ENCODE measurements at regions of chr3 and their contacts with region 1.

Region 1: GRCh38 chr3:4776980-4777581 is 202.2 kb upstream of the BHLHE40 start:
- DNase-seq: peak; percentile 38
- ATAC-seq: peak; percentile 86
- H3K4me3 Mint-ChIP-seq: no peak overlapping the region
- H3K27ac Mint-ChIP-seq: peak overlapping the region; percentile 91
- H3K4me1 Mint-ChIP-seq: peaks cover 40% of the 10 kb centered on the region
- H3K27me3 Mint-ChIP-seq: no peaks in the 10 kb centered on the region

Region 2: GRCh38 chr3:4466741-4467521 is 310.1 kb before region 1 on chr3 and contains the start of gene SUMF1:
- CTCF ChIA-PET with region 1: no interaction called
- POLR2A ChIA-PET with region 1: no interaction called
- intact Hi-C with region 1: no loop called
- DNase-seq: peak; percentile 88
- ATAC-seq: peak; percentile 98
- H3K4me3 Mint-ChIP-seq: peak within 1 kb of the TSS; percentile 87
- H3K27ac Mint-ChIP-seq: peak within 1 kb of the TSS; percentile 93
- H3K4me1 Mint-ChIP-seq: peaks cover 18% of the 10 kb centered on the region
- H3K27me3 Mint-ChIP-seq: no peaks in the 10 kb centered on the region
- total RNA-seq, gene SUMF1: 3.5 to 4.9 TPM

Region 3: DNA sequence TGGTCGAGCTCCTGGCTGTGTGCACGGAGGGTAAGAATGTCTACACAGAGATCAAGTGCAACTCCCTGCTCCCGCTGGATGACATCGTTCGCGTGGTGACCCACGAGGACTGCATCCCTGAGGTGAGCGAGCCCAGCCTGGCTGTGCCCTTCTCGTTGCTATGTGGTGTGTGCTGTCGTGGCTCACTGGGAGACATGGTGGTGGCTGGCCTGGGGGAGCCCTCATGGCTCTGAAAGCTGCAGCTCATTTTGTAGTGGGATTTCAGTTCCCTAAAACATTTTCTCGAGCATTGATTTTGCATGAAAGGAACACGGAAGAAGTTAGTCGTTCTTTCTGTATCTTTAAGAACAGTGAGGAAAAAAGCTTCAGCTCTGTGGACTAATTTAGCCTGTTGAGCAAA is 83.5 kb before region 1 on chr3:
- CTCF ChIA-PET with region 1: no interaction called
- POLR2A ChIA-PET with region 1: no interaction called
- intact Hi-C with region 1: no loop called
- DNase-seq: no peak
- ATAC-seq: no peak
- H3K4me3 Mint-ChIP-seq: no peak overlapping the region
- H3K27ac Mint-ChIP-seq: no peak overlapping the region
- H3K4me1 Mint-ChIP-seq: no peaks in the 10 kb centered on the region
- H3K27me3 Mint-ChIP-seq: no peaks in the 10 kb centered on the region

Region 4: GRCh38 chr3:4741404-4742307 is 35.4 kb before region 1 on chr3:
- CTCF ChIA-PET with region 1: no interaction called
- POLR2A ChIA-PET with region 1: no interaction called
- intact Hi-C with region 1: loop called in 1 of 2 experiments (anchors 1 kb)
- DNase-seq: peak; percentile 44
- ATAC-seq: peak; percentile 39
- H3K4me3 Mint-ChIP-seq: no peak overlapping the region
- H3K27ac Mint-ChIP-seq: peak overlapping the region; percentile 89
- H3K4me1 Mint-ChIP-seq: peaks cover 50% of the 10 kb centered on the region
- H3K27me3 Mint-ChIP-seq: no peaks in the 10 kb centered on the region